B cell (primary cell): ENCODE measurements at regions of chr9 and their contacts with region 1.

Region 1: DNA sequence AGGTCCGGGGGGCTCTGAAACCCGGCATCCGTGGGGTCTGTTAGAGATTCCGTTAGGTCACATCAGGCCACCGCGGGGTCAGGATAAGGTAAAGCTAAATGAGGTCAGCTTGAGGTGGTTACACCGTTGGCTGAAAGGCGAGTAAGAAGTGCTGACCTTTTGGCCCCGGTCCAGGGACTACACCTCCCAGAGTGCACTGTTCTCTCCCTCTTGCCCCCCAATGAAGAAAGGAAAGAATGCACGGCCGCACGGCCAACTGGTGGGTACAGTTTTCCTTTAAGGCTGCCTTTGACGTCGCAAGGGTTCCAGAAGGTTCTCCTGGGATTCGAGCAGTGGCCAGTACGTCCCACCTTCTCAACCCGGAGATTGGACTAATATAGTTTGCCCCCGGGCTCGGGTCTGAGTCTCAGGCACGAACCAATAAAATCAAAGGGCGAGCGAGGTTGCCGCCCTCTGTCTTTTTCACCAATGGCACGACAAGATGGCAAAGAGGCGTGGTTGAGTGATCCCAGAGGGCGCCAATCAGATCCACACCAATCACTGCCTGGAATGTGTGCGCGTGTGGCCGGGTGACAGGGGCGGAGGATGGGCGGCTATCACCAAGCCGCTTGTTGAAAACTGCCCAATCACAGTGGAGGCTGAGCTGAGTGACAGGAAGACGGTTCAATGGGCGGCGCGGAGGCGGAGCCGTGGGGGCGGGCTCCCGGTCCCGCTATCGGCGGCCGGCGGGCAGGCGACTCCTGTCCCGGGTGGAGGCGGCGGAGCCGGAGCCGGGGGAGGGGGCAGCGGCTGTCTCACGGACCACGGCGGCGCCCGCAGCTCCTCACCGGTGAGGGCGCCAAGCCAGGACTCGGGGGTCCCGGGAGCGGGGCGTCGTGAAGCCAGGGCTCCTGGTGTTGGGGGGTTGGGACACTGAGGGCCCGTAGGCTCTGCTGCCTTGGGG is at the start of gene DNAJB5:
- DNase-seq: peak; percentile 98
- ATAC-seq: peak; percentile 96
- H3K4me3 ChIP-seq: peak within 1 kb of the TSS; percentile 74 to 95 (median 84)
- H3K4me3 Mint-ChIP-seq: peak within 1 kb of the TSS; percentile 94
- H3K27ac ChIP-seq: peak within 1 kb of the TSS; percentile 11 to 68
- H3K27ac Mint-ChIP-seq: peak within 1 kb of the TSS; percentile 78
- H3K4me1 ChIP-seq: peaks cover 42 to 51% of the 10 kb centered on the region in 2 donors
- H3K4me1 Mint-ChIP-seq: peaks cover 45% of the 10 kb centered on the region
- H3K27me3 ChIP-seq: no peaks in the 10 kb centered on the region
- H3K27me3 Mint-ChIP-seq: no peaks in the 10 kb centered on the region
- CTCF ChIP-seq: no peak
- total RNA-seq, gene DNAJB5: 1.0 and 2.4 TPM in 2 replicates

Region 2: DNA sequence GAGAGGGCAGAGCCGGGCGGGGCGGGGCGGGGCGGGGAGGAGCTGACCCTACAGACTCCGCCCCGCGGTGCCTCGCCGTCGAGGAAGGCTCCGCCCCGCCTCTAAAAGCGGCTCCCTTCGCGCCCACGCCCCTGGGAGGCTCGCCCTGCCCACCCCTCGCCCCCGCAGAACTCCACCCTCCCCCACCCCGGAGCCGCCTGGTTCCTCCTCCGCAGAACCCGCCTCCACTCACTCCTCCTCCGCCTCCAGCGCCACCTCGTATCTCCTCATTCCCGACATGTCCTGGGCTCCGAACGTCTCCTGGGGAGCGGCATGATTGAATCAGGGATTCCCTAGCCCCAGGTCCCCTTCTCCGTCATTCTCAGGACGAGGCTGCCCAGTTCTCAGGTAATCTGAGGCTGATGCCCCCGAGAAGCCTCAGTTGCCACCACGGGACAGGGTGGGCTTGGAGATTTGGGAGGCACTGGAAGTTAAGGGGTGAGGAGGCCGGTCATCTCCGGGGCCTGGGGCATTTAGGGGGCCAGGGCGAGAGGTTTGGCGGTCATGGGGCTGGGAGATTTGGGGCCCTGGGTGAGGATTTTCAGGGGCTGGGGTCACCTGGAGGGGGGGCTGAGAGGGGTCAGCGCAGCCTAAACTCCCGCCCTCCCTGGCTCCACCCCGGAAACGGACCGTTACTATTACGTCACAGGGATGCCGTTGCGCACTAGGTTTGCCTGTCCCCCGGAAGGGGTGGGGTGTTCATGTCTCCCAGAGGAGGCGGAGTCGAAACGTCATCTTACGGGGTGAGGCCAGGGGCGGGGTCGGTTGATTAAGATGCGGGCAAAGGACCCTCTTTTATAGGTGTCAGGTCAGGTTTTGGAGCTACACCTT is 323.7 kb before region 1 on chr9:
- CTCF ChIA-PET with region 1: no interaction called
- POLR2A ChIA-PET with region 1: no interaction called
- intact Hi-C with region 1: loop called (anchors 1 kb)
- DNase-seq: peak; percentile 93
- ATAC-seq: peak; percentile 90
- H3K4me3 ChIP-seq: peak overlapping the region; percentile 65 to 87 (median 83)
- H3K4me3 Mint-ChIP-seq: peak overlapping the region; percentile 94
- H3K27ac ChIP-seq: peak overlapping the region; percentile 86 to 93
- H3K27ac Mint-ChIP-seq: peak overlapping the region; percentile 94
- H3K4me1 ChIP-seq: peaks cover 10 to 18% of the 10 kb centered on the region in 2 donors
- H3K4me1 Mint-ChIP-seq: peaks cover 20% of the 10 kb centered on the region
- H3K27me3 ChIP-seq: no peaks in the 10 kb centered on the region
- H3K27me3 Mint-ChIP-seq: no peaks in the 10 kb centered on the region
- CTCF ChIP-seq: no peak

Region 3: DNA sequence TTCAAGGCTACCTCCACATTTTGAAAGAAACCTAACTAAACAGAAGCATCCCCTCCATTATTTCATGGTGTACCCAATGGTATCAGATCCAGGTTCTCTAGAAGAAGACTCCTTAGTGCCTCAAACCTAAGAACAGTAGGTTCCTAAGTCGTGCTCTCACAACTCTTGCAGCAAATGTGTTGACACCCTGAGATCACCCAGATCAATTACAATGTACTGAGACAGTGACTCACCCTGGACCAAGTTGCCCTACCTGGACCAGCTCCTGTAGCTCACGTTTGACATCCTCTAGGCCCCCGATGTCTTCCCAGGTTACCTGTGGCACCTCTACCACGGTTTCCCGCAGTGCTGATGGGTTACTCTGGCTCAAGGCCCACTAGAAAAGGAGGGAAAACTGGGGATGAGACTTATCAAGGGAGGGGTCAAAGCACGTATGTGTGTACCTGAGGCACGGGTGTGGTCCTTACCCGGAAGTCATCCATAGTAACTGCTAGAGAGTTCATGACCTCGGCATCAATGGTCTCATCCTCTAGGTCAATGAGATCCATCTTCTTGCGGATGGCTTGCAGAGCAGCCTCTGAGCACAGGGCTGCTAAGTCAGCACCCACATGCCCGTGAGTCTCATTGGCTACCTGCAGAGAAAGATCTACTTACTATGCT is 71.4 kb after region 1 on chr9:
- CTCF ChIA-PET with region 1: no interaction called
- POLR2A ChIA-PET with region 1: no interaction called
- intact Hi-C with region 1: no loop called
- DNase-seq: no peak
- ATAC-seq: no peak
- H3K4me3 ChIP-seq: no peak overlapping the region
- H3K4me3 Mint-ChIP-seq: no peak overlapping the region
- H3K27ac ChIP-seq: no peak overlapping the region
- H3K27ac Mint-ChIP-seq: no peak overlapping the region
- H3K4me1 ChIP-seq: no peaks in the 10 kb centered on the region
- H3K4me1 Mint-ChIP-seq: no peaks in the 10 kb centered on the region
- H3K27me3 ChIP-seq: no peaks in the 10 kb centered on the region
- H3K27me3 Mint-ChIP-seq: no peaks in the 10 kb centered on the region
- CTCF ChIP-seq: no peak

Region 4: DNA sequence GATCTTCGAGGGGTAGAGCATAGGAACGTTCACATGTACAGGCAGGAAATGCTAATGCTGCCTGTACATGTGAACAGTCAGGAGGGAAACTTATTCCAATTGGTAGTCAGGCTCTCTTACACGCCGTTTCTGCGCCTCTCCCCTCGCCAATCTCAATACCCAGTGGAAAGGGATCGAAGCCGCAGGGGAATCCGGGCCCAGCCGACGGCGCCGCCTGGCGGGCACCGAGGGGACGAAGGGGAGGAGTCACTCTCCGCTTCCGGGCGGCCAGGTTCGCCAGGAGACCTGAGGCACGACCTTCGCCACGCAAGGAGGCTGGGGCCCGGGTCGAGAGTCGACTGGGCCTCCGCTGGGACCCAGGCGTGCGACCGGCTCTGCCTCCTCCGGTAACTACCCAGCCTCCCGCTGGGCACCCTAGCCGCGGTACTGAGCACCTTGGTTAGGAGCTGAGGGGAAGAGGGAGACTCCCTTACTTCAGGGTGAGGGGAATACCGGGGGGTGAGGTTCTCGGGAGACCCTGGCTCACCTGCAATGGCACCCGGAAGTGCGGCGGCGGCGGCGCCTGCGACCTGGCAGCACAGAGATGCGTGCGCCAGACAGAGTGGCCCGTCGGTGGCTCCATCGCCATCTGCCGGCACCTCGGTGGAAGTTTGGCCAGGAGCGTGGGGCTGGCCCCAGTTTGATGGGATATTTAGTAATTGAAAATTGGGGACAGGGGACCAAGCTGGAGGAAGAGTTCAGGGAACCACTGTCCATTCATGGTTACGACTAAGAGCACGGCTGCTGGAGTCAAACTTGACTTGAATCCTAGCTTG is 107.0 kb after region 1 on chr9 and contains the start of gene PIGO:
- CTCF ChIA-PET with region 1: interaction called, 3 read pairs
- POLR2A ChIA-PET with region 1: no interaction called
- intact Hi-C with region 1: loop called (anchors 1 kb)
- DNase-seq: peak; percentile 94
- ATAC-seq: peak; percentile 92
- H3K4me3 ChIP-seq: peak within 1 kb of the TSS; percentile 61 to 100 (median 93)
- H3K4me3 Mint-ChIP-seq: peak within 1 kb of the TSS; percentile 90
- H3K27ac ChIP-seq: peak within 1 kb of the TSS; percentile 99
- H3K27ac Mint-ChIP-seq: peak within 1 kb of the TSS; percentile 94
- H3K4me1 ChIP-seq: peaks cover 7 to 16% of the 10 kb centered on the region in 2 donors
- H3K4me1 Mint-ChIP-seq: peaks cover 34% of the 10 kb centered on the region
- H3K27me3 ChIP-seq: no peaks in the 10 kb centered on the region
- H3K27me3 Mint-ChIP-seq: no peaks in the 10 kb centered on the region
- CTCF ChIP-seq: peak; percentile 85
- total RNA-seq, gene PIGO: 32.5 and 34.7 TPM in 2 replicates

Region 5: GRCh38 chr9:35102926-35103659 is 113.8 kb after region 1 on chr9 and contains the start of gene STOML2:
- CTCF ChIA-PET with region 1: interaction called, 3 read pairs
- POLR2A ChIA-PET with region 1: no interaction called
- intact Hi-C with region 1: loop called (anchors 1 kb)
- DNase-seq: peak; percentile 95
- ATAC-seq: peak; percentile 95
- H3K4me3 ChIP-seq: peak within 1 kb of the TSS; percentile 61 to 94 (median 88)
- H3K4me3 Mint-ChIP-seq: peak within 1 kb of the TSS; percentile 86
- H3K27ac ChIP-seq: peak within 1 kb of the TSS; percentile 86 to 96
- H3K27ac Mint-ChIP-seq: peak within 1 kb of the TSS; percentile 97
- H3K4me1 ChIP-seq: peaks cover 13 to 22% of the 10 kb centered on the region in 2 donors
- H3K4me1 Mint-ChIP-seq: peaks cover 28% of the 10 kb centered on the region
- H3K27me3 ChIP-seq: no peaks in the 10 kb centered on the region
- H3K27me3 Mint-ChIP-seq: no peaks in the 10 kb centered on the region
- CTCF ChIP-seq: no peak
- total RNA-seq, gene STOML2: 52.1 and 58.9 TPM in 2 replicates